ENCODE measurements at regions of chr11 and their contacts with region 1.

Region 1: GRCh38 chr11:95150946-95151684 is 61.5 kb downstream of the ENDOD1 start:
- DNase-seq: peak; percentile 93 to 98
- H3K4me3 ChIP-seq: peak overlapping the region; percentile 51
- CTCF ChIP-seq: peak in 1 of 3 donors; percentile 97
- POLR2A ChIP-seq: peak in 1 of 2 donors; percentile 32

Region 2: GRCh38 chr11:95076416-95076815 is 74.7 kb before region 1 on chr11:
- intact Hi-C with region 1: loop called (anchors 5 kb)
- DNase-seq: no peak
- H3K4me3 ChIP-seq: no peak overlapping the region
- CTCF ChIP-seq: no peak
- POLR2A ChIP-seq: no peak

Region 3: GRCh38 chr11:95699631-95700470 is 548.7 kb after region 1 on chr11:
- intact Hi-C with region 1: loop called (anchors 5 kb)
- DNase-seq: no peak
- H3K4me3 ChIP-seq: no peak overlapping the region
- CTCF ChIP-seq: no peak
- POLR2A ChIP-seq: no peak

Region 4: DNA sequence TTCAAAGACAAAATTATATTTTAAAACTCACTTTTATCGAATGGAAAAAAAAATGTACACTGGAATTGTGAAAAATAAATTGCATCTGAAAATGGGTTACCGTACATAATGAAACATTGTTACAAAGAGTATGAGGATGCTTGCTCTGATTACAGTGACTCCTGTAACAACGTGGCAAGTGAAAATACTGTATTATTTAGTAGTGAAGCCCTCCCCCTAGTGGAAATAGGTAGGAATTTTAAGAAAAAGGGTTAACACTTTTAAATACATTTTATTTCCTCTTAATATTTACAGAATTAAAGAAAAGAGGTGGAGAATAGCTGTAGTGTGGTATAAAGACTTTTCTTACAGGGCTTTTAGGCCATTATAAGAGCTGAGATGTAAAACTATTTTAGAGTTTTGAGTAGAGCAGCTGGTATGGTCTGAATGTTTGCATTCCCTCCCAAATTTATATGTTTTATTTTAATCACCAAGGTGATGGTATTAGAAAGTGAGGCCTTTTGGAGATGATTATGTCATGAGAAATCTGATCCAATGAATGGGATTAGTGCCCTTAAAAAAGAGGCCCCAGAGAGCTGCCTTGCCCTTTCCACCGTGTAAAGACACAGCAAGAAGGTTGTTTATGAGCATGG is 613.3 kb after region 1 on chr11:
- intact Hi-C with region 1: loop called (anchors 2 kb)
- DNase-seq: no peak
- H3K4me3 ChIP-seq: no peak overlapping the region
- CTCF ChIP-seq: peak in 1 of 3 donors; percentile 37
- POLR2A ChIP-seq: no peak